ENCODE measurements at regions of chr6 and their contacts with region 1.

Region 1: DNA sequence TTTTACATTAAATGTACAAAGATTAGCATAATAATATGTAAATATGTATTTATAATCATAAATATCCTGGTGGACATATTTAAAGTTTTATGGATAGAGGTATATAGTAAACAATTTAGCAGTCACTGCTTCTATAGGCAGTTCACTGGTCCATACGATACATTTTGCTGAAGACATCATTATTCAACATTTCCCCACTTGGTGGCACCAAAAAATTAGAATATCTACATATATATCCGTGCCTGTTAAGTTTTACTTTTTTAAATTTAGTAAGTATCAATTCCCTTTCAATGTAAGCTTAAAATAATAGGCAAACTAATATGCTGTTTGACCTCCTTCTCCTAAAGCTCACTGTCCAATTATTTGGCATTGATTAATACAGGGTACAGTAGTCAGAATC is 64.2 kb downstream of the LMBRD1 start:
- DNase-seq: no peak
- ATAC-seq: no peak
- H3K4me3 ChIP-seq: no peak overlapping the region
- H3K27ac ChIP-seq: no peak overlapping the region
- H3K4me1 ChIP-seq: no peaks in the 10 kb centered on the region
- H3K27me3 ChIP-seq: no peaks in the 10 kb centered on the region
- CTCF ChIP-seq: peak in 3 of 12 donors; percentile 6 to 18 (median 7)
- POLR2A ChIP-seq: no peak

Region 2: DNA sequence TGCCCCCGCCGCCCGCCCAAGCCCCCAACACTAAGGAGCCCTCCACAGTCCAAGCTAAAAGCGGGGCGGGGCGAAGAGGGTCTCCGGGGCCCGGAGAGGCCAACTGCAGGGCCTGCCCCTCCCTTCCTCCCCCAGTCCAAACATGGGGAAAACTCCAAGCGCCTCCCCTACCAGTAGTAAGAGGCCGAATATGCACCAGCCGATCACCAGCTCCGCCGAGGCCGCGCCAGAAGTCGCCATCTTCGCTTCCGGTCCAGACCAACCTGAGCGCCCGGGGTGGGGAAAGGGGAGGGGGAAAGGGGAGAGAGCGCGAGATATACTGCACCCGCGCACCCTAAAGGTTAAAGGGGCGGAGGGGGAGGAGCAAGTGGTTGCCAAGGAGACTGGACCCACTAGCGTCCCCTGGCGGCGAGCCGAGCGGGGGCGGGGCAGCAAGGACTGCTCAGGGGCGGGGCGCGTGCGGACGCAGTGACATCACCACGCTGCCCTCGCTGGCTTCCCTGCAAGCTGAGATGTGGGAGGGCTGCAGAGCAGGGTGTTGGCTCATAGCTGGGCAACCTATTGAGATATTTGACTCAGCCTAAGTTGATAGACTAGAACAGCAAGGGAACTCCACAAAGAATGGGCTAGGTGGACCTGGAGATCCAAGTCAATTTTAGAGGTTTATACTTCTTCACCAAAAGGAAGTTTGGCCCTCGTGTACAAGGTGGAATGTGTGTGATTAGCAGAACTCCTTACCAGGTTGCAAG is 64.2 kb after region 1 on chr6 and contains the start of gene LMBRD1:
- intact Hi-C with region 1: loop called in 1 of 10 experiments (anchors 5 kb)
- DNase-seq: peak; percentile 97 to 99 (median 98)
- ATAC-seq: peak; percentile 97 to 99 (median 98)
- H3K4me3 ChIP-seq: peak within 1 kb of the TSS; percentile 67 to 87 (median 82)
- H3K27ac ChIP-seq: peak within 1 kb of the TSS; percentile 83 to 97 (median 92)
- H3K4me1 ChIP-seq: peaks cover 0 to 40% (median 20%) of the 10 kb centered on the region in 12 donors
- H3K27me3 ChIP-seq: no peaks in the 10 kb centered on the region
- CTCF ChIP-seq: peak; percentile 69 to 96 (median 90)
- POLR2A ChIP-seq: peak in 1 of 2 donors; percentile 49
- total RNA-seq, gene LMBRD1: 41.7 to 53.6 (median 45.1) TPM